Heart right ventricle (tissue), 16 donors: ENCODE measurements at regions of chr22 and their contacts with region 1.

Region 1: GRCh38 chr22:29040385-29041275 is 21.0 kb downstream of the C22orf31 start:
- DNase-seq: peak; percentile 29 to 73
- ATAC-seq: peak; percentile 67 to 84 (median 76)
- H3K4me3 ChIP-seq: no peak overlapping the region
- H3K27ac ChIP-seq: peak overlapping the region in 1 of 10 donors; percentile 18
- H3K4me1 ChIP-seq: peaks cover 0 to 14% (median 4%) of the 10 kb centered on the region in 9 donors
- H3K27me3 ChIP-seq: no peaks in the 10 kb centered on the region
- CTCF ChIP-seq: peak; percentile 90 to 99 (median 97)

Region 2: DNA sequence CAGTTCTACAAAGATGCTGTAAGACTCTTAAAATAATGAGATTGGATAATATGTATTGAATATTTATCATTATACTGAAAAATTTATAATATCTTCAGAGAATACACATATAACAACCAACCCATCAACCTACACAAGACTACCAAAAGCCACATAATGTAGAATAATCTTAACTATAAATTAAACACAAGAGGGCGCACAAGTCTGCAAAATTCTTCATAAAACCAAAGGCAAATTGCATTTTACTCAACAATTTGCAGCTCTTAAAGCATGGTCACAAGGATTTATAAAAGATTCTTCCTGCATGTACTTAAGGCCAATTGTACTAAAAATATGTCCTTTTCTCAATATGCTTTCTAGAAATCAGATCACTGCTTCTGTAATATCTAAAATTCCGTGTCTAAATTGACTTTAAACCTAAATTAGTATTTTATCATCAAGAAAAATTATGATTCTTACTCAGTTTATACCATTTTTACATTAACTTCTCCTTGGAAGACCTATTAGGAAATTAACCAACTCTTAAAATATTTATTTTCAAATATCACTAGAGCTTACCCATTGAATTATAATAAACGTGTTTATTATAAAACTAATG is 440.0 kb before region 1 on chr22:
- intact Hi-C with region 1: loop called in 7 of 10 experiments (anchors 5 to 10 kb)
- DNase-seq: peak in 1 of 2 donors; percentile 17
- ATAC-seq: peak in 4 of 8 donors; percentile 28 to 39 (median 34)
- H3K4me3 ChIP-seq: no peak overlapping the region
- H3K27ac ChIP-seq: no peak overlapping the region
- H3K4me1 ChIP-seq: no peaks in the 10 kb centered on the region
- H3K27me3 ChIP-seq: no peaks in the 10 kb centered on the region
- CTCF ChIP-seq: peak in 8 of 9 donors; percentile 36 to 78 (median 62)

Region 3: DNA sequence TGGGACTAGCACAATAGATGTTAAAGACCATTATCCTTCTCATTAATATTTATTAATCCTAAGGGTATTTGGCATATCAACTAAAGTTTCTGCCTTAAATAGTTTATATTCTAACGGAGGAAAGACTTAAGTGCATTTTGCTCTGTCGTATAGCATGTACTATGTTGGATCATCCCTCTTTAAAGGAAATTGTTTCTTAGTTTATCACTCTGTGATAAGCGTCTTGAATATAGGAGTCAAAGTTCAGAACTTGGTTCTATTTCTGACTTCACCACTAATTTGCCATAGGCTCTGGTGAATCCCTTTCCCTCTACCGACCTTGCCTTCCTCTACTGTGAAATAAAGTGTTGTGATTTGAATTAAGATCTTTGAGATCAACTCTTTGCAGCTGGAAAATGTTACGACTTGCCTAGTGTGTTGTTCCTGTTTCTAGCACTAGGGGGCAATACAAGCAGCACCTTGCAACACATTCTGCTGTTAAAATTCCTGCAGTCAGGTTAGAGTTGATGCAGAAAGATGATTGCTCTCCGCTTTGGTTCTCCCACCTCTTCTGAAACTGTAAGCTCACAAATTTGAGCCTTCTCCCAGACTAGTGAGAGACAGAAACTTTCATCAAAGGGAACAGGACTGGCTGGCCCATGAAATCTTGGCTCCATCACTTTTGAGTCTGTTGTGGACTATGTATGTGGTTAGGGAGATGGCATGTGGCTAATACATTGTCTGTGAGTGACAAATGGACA is 185.1 kb before region 1 on chr22:
- intact Hi-C with region 1: loop called (anchors 1 to 5 kb)
- DNase-seq: peak in 1 of 2 donors; percentile 57
- ATAC-seq: peak in 7 of 8 donors; percentile 41 to 62 (median 54)
- H3K4me3 ChIP-seq: no peak overlapping the region
- H3K27ac ChIP-seq: no peak overlapping the region
- H3K4me1 ChIP-seq: peaks cover 0 to 7% (median 0%) of the 10 kb centered on the region in 9 donors
- H3K27me3 ChIP-seq: no peaks in the 10 kb centered on the region
- CTCF ChIP-seq: peak; percentile 84 to 94 (median 91)